Activated CD4-positive, alpha-beta memory T cell treated with anti-CD3 and anti-CD28 coated beads, Interleukin-2, amount 10 ng/mL, durations not matched to agents 7 days and 5 days (primary cell): ENCODE measurements at regions of chr5 and their contacts with region 1.

Region 1: GRCh38 chr5:16791036-16791705 is 144.9 kb downstream of the MYO10 start:
- DNase-seq: no peak
- H3K4me3 Mint-ChIP-seq: no peak overlapping the region
- H3K27ac Mint-ChIP-seq: no peak overlapping the region
- H3K4me1 Mint-ChIP-seq: no peaks in the 10 kb centered on the region
- H3K27me3 Mint-ChIP-seq: peaks cover 2% of the 10 kb centered on the region

Region 2: GRCh38 chr5:16626663-16627264 is 164.4 kb before region 1 on chr5:
- CTCF ChIA-PET with region 1: no interaction called
- POLR2A ChIA-PET with region 1: no interaction called
- DNase-seq: peak; percentile 25
- H3K4me3 Mint-ChIP-seq: no peak overlapping the region
- H3K27ac Mint-ChIP-seq: peak overlapping the region; percentile 51
- H3K4me1 Mint-ChIP-seq: peaks cover 26% of the 10 kb centered on the region
- H3K27me3 Mint-ChIP-seq: no peaks in the 10 kb centered on the region

Region 3: DNA sequence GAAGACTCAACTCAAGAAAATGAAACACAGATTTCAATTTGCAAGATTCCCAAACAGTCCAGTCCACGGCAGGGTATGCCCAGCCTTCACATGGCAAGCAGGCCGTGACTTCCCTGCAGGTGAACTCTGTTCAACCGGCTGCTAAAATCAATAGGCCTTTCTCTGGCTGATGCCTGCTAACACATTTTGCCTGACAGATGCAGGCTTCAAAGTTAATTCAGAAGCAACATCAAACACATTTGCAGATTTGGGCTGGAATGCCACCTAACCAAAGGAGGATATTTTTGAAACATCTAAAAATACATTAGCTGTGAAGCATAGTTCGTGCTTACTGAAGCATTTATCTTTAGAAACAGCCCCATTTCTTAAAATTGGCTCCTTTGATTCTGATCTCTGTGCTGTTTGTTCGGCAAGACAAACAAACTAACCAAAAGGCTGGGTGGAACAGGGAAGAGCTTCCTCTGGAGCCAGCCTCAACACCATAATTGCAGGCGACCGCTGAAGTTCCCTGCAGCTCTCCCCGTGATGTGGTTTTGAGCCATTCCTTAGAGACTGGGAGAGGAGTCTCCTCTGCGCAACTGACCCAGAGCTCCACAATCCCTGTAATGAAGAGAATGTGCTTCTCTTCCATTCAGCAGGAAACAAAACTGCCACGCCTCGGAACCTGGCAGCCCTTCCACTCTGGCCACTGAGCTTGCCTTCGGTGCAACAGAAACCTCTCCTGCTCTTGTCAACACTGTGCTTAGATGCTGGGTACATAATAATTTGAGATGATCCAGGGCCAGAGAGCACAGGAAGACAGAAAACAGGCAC is 18.4 kb after region 1 on chr5:
- CTCF ChIA-PET with region 1: no interaction called
- POLR2A ChIA-PET with region 1: no interaction called
- DNase-seq: no peak
- H3K4me3 Mint-ChIP-seq: no peak overlapping the region
- H3K27ac Mint-ChIP-seq: no peak overlapping the region
- H3K4me1 Mint-ChIP-seq: no peaks in the 10 kb centered on the region
- H3K27me3 Mint-ChIP-seq: no peaks in the 10 kb centered on the region

Region 4: DNA sequence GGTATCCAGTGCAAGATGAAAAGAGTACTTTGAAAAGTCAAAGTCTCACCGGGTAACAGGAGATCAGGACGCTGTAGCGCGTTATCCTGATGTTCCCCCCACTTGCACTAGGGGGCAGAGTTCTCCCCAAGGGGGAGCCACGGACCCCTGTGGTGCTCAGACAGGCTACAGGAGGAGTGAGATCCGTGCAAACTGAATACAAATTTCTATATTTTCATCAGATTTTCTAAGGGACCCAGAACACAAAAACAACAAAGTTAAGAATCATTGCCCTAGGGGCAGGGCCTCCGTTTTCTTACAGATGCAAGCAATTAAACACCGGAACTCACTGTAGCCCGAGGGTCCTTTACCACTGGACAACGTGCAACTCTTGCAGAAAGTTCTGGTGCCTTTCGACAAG is 143.0 kb after region 1 on chr5:
- CTCF ChIA-PET with region 1: no interaction called
- POLR2A ChIA-PET with region 1: no interaction called
- DNase-seq: peak; percentile 18
- H3K4me3 Mint-ChIP-seq: no peak overlapping the region
- H3K27ac Mint-ChIP-seq: no peak overlapping the region
- H3K4me1 Mint-ChIP-seq: peaks cover 11% of the 10 kb centered on the region
- H3K27me3 Mint-ChIP-seq: peaks cover 45% of the 10 kb centered on the region

Region 5: DNA sequence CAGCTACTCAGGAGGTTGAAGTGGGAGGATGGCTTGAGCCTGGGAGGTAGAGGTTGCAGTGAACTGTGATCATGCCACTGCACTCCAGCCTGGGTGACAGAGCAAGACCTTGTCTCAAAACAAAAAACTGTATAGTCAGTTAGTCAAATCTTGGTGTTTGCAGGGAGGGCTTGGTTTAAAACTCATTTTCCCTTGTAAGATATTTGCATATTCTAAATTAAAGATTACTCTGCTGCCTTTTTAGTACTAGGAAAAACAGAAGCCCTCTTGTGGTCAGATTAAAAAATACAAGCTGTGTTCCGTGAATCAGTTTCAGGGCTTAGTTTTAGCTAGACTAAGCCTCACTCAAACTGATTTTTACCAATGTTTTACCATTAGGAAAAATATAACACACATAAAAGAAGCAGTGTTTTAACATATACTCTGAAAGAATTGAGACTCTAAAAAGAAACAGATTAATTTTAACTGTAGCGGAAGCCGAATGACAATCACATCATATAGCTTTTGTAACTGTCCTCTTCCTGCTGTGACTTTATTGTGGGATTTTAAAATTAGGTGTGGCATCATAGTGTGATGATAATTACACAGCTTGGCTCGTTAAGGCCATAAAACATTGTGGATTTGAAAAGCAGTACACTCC is 341.4 kb after region 1 on chr5:
- CTCF ChIA-PET with region 1: interaction called, 11 read pairs
- POLR2A ChIA-PET with region 1: no interaction called
- DNase-seq: no peak
- H3K4me3 Mint-ChIP-seq: no peak overlapping the region
- H3K27ac Mint-ChIP-seq: no peak overlapping the region
- H3K4me1 Mint-ChIP-seq: peaks cover 9% of the 10 kb centered on the region
- H3K27me3 Mint-ChIP-seq: no peaks in the 10 kb centered on the region